Activated T-helper 2 cell treated with anti-CD3 and anti-CD28 coated beads, Interferon-gamma antibody, Interleukin-2, Interleukin-4, amounts not matched to agents 10 μg/mL and 5 μg/mL and 100 μg/mL, durations not matched to agents 14 hours and 24 hours and 36 hours (primary cell): ENCODE measurements at regions of chr1 and their contacts with region 1.

Region 1: GRCh38 chr1:33080885-33081553 is at the start of gene AZIN2:
- DNase-seq: peak; percentile 91
- H3K4me3 Mint-ChIP-seq: peak within 1 kb of the TSS; percentile 70
- H3K27ac Mint-ChIP-seq: no peak within 1 kb of the TSS
- H3K4me1 Mint-ChIP-seq: peaks cover 20% of the 10 kb centered on the region
- H3K27me3 Mint-ChIP-seq: peaks cover 25% of the 10 kb centered on the region
- total RNA-seq, gene AZIN2: 2.4 and 2.9 TPM in 2 replicates

Region 2: DNA sequence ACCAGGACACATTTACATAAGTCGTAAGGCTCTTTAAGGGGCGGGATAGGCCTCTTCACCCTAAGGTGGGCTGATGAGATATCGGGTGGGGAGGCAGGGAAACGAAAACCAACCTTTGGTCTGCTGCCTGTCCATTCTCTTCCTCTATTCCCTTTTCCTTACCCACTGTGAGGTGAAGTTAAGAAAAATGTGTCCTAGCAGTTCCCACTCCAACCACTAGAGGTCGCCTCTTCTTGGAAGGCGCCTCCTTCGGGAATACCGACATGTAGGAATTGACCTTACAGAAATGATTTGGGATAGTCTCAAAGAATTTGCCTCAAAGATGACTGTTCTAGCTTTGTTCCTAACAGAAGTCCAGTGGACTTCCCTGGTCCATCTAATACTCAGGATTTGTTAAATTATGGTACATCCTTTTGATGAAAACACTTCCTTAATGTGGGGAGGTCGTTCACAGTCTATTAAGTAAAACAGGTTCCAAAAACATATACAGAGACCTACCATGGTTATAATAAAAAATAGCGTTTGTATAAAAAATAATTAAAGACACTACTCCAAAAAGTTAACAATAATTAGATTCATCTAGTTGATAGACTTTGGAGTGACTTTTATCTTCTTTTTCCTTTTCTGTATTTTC is 14.1 kb after region 1 on chr1:
- intact Hi-C with region 1: loop called (anchors 1 kb)
- DNase-seq: no peak
- H3K4me3 Mint-ChIP-seq: no peak overlapping the region
- H3K27ac Mint-ChIP-seq: no peak overlapping the region
- H3K4me1 Mint-ChIP-seq: peaks cover 45% of the 10 kb centered on the region
- H3K27me3 Mint-ChIP-seq: no peaks in the 10 kb centered on the region